Heart left ventricle (tissue), 16 donors: ENCODE measurements at regions of chr12 and their contacts with region 1.

Region 1: GRCh38 chr12:11162502-11162901 is 8.5 kb upstream of the SMIM10L1 start:
- DNase-seq: no peak
- ATAC-seq: no peak
- H3K4me3 ChIP-seq: no peak overlapping the region
- H3K27ac ChIP-seq: no peak overlapping the region
- H3K4me1 ChIP-seq: peaks cover 0 to 23% (median 5%) of the 10 kb centered on the region in 12 donors
- H3K27me3 ChIP-seq: no peaks in the 10 kb centered on the region
- CTCF ChIP-seq: no peak
- POLR2A ChIP-seq: no peak

Region 2: GRCh38 chr12:10690906-10691305 is 471.6 kb before region 1 on chr12:
- intact Hi-C with region 1: no loop called
- DNase-seq: no peak
- ATAC-seq: no peak
- H3K4me3 ChIP-seq: no peak overlapping the region
- H3K27ac ChIP-seq: no peak overlapping the region
- H3K4me1 ChIP-seq: no peaks in the 10 kb centered on the region
- H3K27me3 ChIP-seq: no peaks in the 10 kb centered on the region
- CTCF ChIP-seq: no peak
- POLR2A ChIP-seq: no peak

Region 3: DNA sequence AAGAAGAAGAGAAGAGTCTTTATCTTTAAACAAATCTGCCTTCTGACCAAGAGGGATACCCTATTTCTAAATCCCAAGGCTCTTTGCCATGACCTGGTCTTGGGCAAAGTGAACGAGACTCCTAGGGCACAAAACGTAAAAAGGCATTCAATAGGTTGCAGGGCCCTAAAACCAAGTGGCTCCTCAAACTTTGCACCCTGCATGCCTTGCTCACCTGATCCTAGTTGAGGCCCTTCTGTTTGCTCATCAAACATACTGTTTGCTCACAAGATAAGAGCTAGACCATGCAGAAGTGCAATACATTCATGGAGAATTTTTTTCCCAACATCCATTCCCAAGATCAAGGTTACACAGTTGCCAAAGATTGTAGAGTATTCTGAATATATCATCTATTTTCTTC is 270.6 kb before region 1 on chr12:
- intact Hi-C with region 1: no loop called
- DNase-seq: no peak
- ATAC-seq: no peak
- H3K4me3 ChIP-seq: no peak overlapping the region
- H3K27ac ChIP-seq: no peak overlapping the region
- H3K4me1 ChIP-seq: no peaks in the 10 kb centered on the region
- H3K27me3 ChIP-seq: no peaks in the 10 kb centered on the region
- CTCF ChIP-seq: no peak
- POLR2A ChIP-seq: no peak

Region 4: DNA sequence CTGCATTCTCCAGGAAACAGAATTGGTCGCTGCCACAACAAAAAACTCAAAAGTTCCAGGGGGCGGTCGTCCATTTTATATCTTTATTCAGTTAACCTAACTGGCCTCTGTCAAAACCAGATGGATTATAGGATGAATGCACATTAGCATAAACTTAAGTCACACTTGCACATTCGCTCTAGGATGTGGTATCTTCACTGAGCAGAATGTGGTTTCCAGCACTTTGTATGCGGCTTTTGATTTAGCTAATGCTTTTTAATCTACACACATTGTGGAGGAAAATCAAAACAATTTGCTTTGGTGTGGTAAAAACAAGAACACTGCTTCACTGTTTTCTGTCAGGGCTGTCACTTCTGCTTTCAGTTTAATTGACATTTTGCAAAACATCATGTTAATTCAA is 180.3 kb before region 1 on chr12:
- intact Hi-C with region 1: no loop called
- DNase-seq: no peak
- ATAC-seq: no peak
- H3K4me3 ChIP-seq: no peak overlapping the region
- H3K27ac ChIP-seq: no peak overlapping the region
- H3K4me1 ChIP-seq: peaks cover 0 to 7% (median 0%) of the 10 kb centered on the region in 12 donors
- H3K27me3 ChIP-seq: no peaks in the 10 kb centered on the region
- CTCF ChIP-seq: no peak
- POLR2A ChIP-seq: no peak

Region 5: GRCh38 chr12:11026121-11026520 is 136.4 kb before region 1 on chr12:
- intact Hi-C with region 1: no loop called
- DNase-seq: no peak
- ATAC-seq: no peak
- H3K4me3 ChIP-seq: no peak overlapping the region
- H3K27ac ChIP-seq: no peak overlapping the region
- H3K4me1 ChIP-seq: no peaks in the 10 kb centered on the region
- H3K27me3 ChIP-seq: no peaks in the 10 kb centered on the region
- CTCF ChIP-seq: peak in 1 of 12 donors; percentile 5
- POLR2A ChIP-seq: no peak

Region 6: DNA sequence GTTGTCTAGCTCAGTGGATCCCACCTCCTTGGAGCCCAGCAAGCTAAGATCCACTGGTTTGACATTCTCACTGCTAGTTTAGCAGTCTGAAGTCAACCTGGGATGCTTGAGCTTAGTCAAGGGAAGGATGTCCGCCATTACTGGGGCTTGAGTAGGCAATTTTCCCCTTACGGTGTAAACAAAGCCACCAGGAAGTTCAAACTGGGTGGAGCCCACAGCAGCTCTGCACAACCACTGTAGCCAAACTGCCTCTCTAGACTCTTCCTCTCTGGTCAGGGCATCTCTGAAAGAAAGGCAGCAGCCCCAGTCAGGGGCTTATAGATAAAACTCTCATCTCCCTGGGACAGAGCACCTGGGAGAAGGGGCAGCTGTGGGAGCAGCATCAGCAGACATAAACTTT is 53.6 kb before region 1 on chr12:
- intact Hi-C with region 1: loop called in 1 of 10 experiments (anchors 10 kb)
- DNase-seq: no peak
- ATAC-seq: no peak
- H3K4me3 ChIP-seq: no peak overlapping the region
- H3K27ac ChIP-seq: no peak overlapping the region
- H3K4me1 ChIP-seq: no peaks in the 10 kb centered on the region
- H3K27me3 ChIP-seq: no peaks in the 10 kb centered on the region
- CTCF ChIP-seq: no peak
- POLR2A ChIP-seq: no peak